ENCODE measurements at regions of chr6 and their contacts with region 1.

Region 1: DNA sequence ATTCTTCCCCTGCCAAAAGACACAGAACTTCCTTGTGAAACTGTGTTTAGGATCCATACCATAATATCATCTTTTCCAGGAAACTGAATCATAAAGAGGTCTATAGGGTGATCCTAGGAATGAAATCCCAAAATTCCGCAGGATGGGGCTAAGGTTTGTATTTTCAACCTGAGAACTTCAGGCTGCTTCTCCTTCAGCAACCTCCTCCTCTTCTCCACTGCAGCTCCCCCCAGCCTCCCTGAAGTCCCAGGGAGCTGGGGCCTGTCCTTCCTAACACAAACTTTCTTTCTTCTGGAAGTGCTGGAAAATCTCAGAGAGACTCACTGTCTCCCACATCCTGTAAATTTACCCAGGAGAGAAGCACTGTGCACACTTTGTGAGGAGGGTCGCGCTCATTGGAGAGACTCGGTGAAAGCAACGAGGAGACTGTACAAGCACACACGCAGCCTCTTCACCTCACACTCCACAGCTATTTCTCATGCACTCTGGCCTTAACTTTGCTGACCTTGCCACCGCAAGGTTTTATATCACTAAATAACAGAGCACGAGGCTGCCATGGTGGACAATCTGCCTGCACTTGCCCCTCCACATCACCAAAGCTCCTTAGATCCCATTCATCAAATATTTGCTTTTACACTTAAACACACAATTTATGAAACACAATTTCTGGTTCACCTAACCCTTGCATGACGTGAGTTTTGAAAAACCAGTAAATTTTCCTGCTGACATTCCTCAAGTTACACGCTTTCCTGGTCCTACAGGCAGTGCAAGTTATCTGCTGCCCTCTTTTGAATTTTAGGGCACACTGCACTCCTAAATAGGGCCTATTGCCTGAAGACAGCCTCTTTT is 14.3 kb downstream of the ID4 start:
- DNase-seq: no peak
- ATAC-seq: peak; percentile 71
- H3K4me3 ChIP-seq: no peak overlapping the region
- H3K27ac ChIP-seq: no peak overlapping the region
- H3K4me1 ChIP-seq: no peaks in the 10 kb centered on the region
- H3K27me3 ChIP-seq: no peaks in the 10 kb centered on the region
- CTCF ChIP-seq: peak; percentile 54 to 59 (median 56); a peak in 5 of 6 replicates
- EP300 ChIP-seq: no peak
- POLR2A ChIP-seq: no peak
- RAD21 ChIP-seq: peak; percentile 70

Region 2: DNA sequence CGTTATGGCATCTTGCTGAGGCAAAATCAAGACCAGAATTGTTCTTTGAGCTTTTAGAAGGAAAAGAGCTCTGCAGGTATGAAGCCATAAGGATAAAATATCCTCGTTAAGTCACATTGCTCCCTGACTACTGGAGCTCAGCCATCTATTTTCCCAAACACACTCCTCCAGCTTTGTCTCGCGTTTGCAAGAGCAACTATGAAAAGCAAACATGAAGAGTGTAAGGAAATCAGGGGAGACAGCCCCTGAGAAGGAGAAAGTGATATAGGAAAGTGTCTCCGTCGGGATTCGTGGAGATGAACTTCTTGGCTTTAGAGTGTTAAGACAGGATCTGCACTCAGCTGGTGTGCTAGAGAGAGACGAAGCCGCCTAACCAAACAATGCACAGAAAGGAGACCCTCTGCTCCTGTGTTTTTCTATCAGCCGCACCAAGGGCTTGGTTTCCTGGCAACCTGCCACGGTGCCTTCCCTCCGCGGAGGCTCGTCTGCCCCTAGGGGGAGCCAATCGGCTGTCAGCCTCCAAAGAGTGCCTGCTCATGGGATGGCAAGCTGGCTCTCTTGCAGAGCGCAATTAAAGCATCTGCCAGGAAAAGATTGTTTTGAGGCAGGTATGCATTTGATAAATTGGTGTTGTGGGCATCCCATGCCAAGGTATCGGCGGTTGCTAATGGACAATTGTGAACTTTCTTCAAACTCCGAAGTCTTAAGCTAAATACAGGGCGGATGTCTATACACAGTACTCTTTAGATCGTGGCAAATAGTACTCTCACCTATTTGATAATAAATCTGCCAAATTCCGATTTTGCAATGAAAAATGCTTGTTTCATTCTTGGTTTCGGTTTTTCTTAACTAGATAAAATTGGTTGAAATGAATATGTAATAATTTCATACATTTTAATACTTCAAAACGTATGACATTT is 861.1 kb before region 1 on chr6:
- CTCF ChIA-PET with region 1: interaction called, 3 read pairs
- POLR2A ChIA-PET with region 1: no interaction called
- RAD21 ChIA-PET with region 1: no interaction called
- SMC1A ChIA-PET with region 1: no interaction called
- in situ Hi-C with region 1: no loop called
- intact Hi-C with region 1: loop called (anchors 10 kb)
- DNase-seq: no peak
- ATAC-seq: peak; percentile 87
- H3K4me3 ChIP-seq: no peak overlapping the region
- H3K27ac ChIP-seq: no peak overlapping the region
- H3K4me1 ChIP-seq: no peaks in the 10 kb centered on the region
- H3K27me3 ChIP-seq: no peaks in the 10 kb centered on the region; a peak in 2 of 4 replicates
- CTCF ChIP-seq: peak; percentile 56 to 71 (median 61)
- EP300 ChIP-seq: no peak
- POLR2A ChIP-seq: no peak
- RAD21 ChIP-seq: 0 out of 2 replicates have a peak, but pooled peaks have one; percentile 26